PC-9 (cell line): ENCODE measurements at regions of chr7 and their contacts with region 1.

Region 1: DNA sequence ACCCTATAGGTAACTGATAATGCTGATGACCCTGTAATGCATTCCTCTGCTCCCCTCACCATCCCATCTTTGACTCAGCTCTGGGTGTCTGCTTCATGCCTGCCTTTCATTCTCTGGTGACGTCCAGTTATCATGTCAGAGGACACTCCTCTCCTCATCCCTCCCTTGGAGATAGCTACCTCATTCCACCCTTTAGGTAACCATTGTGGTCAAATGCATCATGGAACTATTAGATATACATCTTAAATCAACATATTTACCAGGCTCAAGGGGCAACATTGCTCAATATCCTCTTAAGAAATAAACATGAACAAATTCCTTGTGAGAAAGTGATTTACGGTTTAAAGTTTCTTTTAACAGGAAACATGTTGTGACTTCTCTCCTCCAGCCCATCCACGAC is 511.6 kb upstream of the IGFBP3 start:
- DNase-seq: peak; percentile 46 to 94
- H3K4me3 ChIP-seq: no peak overlapping the region
- H3K27ac ChIP-seq: peak overlapping the region; percentile 47
- H3K4me1 ChIP-seq: peaks cover 16% of the 10 kb centered on the region
- H3K27me3 ChIP-seq: no peaks in the 10 kb centered on the region
- CTCF ChIP-seq: no peak

Region 2: GRCh38 chr7:46486256-46487206 is 53.9 kb after region 1 on chr7:
- CTCF ChIA-PET with region 1: no interaction called
- POLR2A ChIA-PET with region 1: no interaction called
- intact Hi-C with region 1: loop called (anchors 2 kb)
- DNase-seq: no peak
- H3K4me3 ChIP-seq: no peak overlapping the region
- H3K27ac ChIP-seq: peak overlapping the region; percentile 18
- H3K4me1 ChIP-seq: peaks cover 26% of the 10 kb centered on the region
- H3K27me3 ChIP-seq: no peaks in the 10 kb centered on the region
- CTCF ChIP-seq: no peak